PC-3 (cell line): ENCODE measurements at regions of chr18 and their contacts with region 1.

Region 1: GRCh38 chr18:46264235-46264893 is 160.2 kb downstream of the HAUS1 start:
- DNase-seq: no peak
- ATAC-seq: no peak
- H3K4me3 ChIP-seq: no peak overlapping the region
- H3K27ac ChIP-seq: no peak overlapping the region
- H3K4me1 ChIP-seq: peaks cover 19% of the 10 kb centered on the region
- H3K27me3 ChIP-seq: no peaks in the 10 kb centered on the region
- CTCF ChIP-seq: no peak

Region 2: DNA sequence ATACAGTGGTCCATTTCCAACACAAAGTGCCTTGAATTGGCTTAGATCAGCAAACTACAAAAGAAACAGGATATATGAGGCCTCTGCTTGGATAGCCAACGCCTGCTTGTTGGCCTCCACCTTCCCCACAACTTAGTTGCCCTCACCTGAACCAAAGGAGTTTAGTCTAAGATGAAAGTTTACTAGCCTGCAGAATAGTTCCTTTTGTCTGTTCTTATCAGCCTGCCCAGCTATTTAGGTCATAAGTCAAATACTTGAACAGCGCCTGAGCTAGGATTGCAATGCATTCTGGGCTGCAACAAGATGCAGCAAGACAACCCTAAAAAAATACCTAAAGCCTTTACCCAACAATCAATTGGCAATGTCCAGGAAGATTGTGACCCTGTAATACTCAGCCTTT is 284.1 kb before region 1 on chr18:
- CTCF ChIA-PET with region 1: no interaction called
- POLR2A ChIA-PET with region 1: no interaction called
- intact Hi-C with region 1: loop called (anchors 10 kb)
- DNase-seq: no peak
- ATAC-seq: no peak
- H3K4me3 ChIP-seq: no peak overlapping the region
- H3K27ac ChIP-seq: no peak overlapping the region
- H3K4me1 ChIP-seq: no peaks in the 10 kb centered on the region
- H3K27me3 ChIP-seq: no peaks in the 10 kb centered on the region
- CTCF ChIP-seq: no peak